Heart left ventricle (tissue), 16 donors: ENCODE measurements at regions of chr1 and their contacts with region 1.

Region 1: DNA sequence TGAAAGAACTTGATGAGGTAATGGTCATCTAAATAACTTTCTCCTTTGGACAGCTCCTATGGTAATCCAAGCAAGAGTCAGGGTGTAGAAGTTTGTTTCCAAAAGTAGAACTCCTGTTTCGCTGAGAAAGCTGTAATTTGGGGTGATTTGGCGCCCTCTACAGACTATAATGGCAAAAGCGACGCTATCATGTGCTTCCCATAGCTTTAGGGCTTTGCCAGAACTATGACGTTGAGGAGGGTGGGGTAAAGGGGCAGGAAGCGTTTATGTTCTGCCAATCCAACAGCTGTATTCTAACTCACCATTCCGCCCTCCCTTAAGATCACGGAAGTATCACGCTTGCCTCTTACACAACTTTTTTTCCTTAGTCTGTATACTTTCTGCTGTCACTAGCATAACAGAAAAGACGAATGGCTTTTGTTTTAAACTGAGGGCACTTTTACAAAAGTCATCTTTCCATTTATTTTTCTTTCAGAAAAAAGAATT is at the start of gene FMO4:
- DNase-seq: peak in 4 of 5 donors; percentile 90 to 97 (median 93)
- ATAC-seq: peak; percentile 100
- H3K4me3 ChIP-seq: peak within 1 kb of the TSS in 11 of 12 donors; percentile 29 to 59 (median 45)
- H3K27ac ChIP-seq: peak within 1 kb of the TSS in 11 of 12 donors; percentile 38 to 83 (median 65)
- H3K4me1 ChIP-seq: peaks cover 0 to 25% (median 7%) of the 10 kb centered on the region in 12 donors
- H3K27me3 ChIP-seq: no peaks in the 10 kb centered on the region
- CTCF ChIP-seq: peak; percentile 68 to 93 (median 85)
- POLR2A ChIP-seq: peak in 1 of 2 donors; percentile 24
- total RNA-seq, gene FMO4: 2.7 to 10.1 (median 5.9) TPM

Region 2: GRCh38 chr1:170967042-170967910 is 346.6 kb before region 1 on chr1:
- intact Hi-C with region 1: loop called in 6 of 10 experiments (anchors 2 to 10 kb)
- DNase-seq: peak in 1 of 5 donors; percentile 6
- ATAC-seq: peak in 2 of 4 donors; percentile 63 to 69
- H3K4me3 ChIP-seq: peak overlapping the region in 1 of 12 donors; percentile 17
- H3K27ac ChIP-seq: no peak overlapping the region
- H3K4me1 ChIP-seq: peaks cover 0 to 4% (median 0%) of the 10 kb centered on the region in 12 donors
- H3K27me3 ChIP-seq: no peaks in the 10 kb centered on the region
- CTCF ChIP-seq: peak; percentile 52 to 79 (median 68)
- POLR2A ChIP-seq: no peak

Region 3: GRCh38 chr1:171075041-171075440 is 238.8 kb before region 1 on chr1:
- intact Hi-C with region 1: loop called in 7 of 10 experiments (anchors 5 to 10 kb)
- DNase-seq: no peak
- ATAC-seq: no peak
- H3K4me3 ChIP-seq: no peak overlapping the region
- H3K27ac ChIP-seq: no peak overlapping the region
- H3K4me1 ChIP-seq: no peaks in the 10 kb centered on the region
- H3K27me3 ChIP-seq: no peaks in the 10 kb centered on the region
- CTCF ChIP-seq: no peak
- POLR2A ChIP-seq: no peak

Region 4: DNA sequence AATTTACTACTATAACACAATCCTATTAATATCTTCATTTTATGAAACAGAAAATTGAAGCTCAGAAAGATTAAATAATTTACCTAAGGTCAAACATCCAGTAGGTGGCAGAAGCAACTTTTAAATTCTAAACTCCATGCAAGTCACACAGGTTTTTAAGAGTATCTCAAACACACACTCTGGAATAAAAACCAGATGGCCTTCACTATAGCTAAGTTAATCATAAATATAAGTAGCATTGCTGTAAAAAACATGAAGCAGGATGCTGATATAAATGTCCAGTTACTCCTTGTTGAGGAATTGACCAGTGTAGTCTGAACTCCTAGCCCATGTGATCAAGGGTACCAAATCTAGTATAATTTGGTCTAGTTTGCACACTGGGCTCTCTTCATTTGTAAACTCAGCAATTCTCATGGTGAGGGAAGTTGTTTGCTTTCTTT is 232.5 kb before region 1 on chr1:
- intact Hi-C with region 1: loop called in 8 of 10 experiments (anchors 2 to 10 kb)
- DNase-seq: no peak
- ATAC-seq: peak in 2 of 4 donors; percentile 46 to 50
- H3K4me3 ChIP-seq: peak overlapping the region in 1 of 12 donors; percentile 4
- H3K27ac ChIP-seq: peak overlapping the region in 9 of 12 donors; percentile 13 to 76 (median 51)
- H3K4me1 ChIP-seq: peaks cover 0 to 29% (median 9%) of the 10 kb centered on the region in 12 donors
- H3K27me3 ChIP-seq: no peaks in the 10 kb centered on the region
- CTCF ChIP-seq: peak; percentile 36 to 71 (median 62)
- POLR2A ChIP-seq: no peak

Region 5: GRCh38 chr1:171245458-171246064 is 68.3 kb before region 1 on chr1:
- intact Hi-C with region 1: loop called (anchors 1 to 5 kb)
- DNase-seq: no peak
- ATAC-seq: peak in 3 of 4 donors; percentile 57 to 69 (median 59)
- H3K4me3 ChIP-seq: no peak overlapping the region
- H3K27ac ChIP-seq: no peak overlapping the region
- H3K4me1 ChIP-seq: peaks cover 0 to 2% (median 0%) of the 10 kb centered on the region in 12 donors
- H3K27me3 ChIP-seq: peaks cover 0 to 2% (median 0%) of the 10 kb centered on the region in 9 donors
- CTCF ChIP-seq: peak; percentile 47 to 75 (median 66)
- POLR2A ChIP-seq: no peak

Region 6: GRCh38 chr1:171434717-171435346 is 121.0 kb after region 1 on chr1:
- intact Hi-C with region 1: no loop called
- DNase-seq: peak in 2 of 5 donors; percentile 29 to 52
- ATAC-seq: peak; percentile 39 to 88 (median 70)
- H3K4me3 ChIP-seq: peak overlapping the region in 4 of 12 donors; percentile 1 to 28 (median 17)
- H3K27ac ChIP-seq: peak overlapping the region in 11 of 12 donors; percentile 18 to 85 (median 64)
- H3K4me1 ChIP-seq: peaks cover 0 to 21% (median 6%) of the 10 kb centered on the region in 12 donors
- H3K27me3 ChIP-seq: no peaks in the 10 kb centered on the region
- CTCF ChIP-seq: no peak
- POLR2A ChIP-seq: no peak

Region 7: GRCh38 chr1:171898941-171899340 is 585.1 kb after region 1 on chr1:
- intact Hi-C with region 1: no loop called
- DNase-seq: no peak
- ATAC-seq: peak in 2 of 4 donors; percentile 26 to 60
- H3K4me3 ChIP-seq: no peak overlapping the region
- H3K27ac ChIP-seq: peak overlapping the region in 2 of 12 donors; percentile 2 to 39
- H3K4me1 ChIP-seq: peaks cover 0 to 7% (median 0%) of the 10 kb centered on the region in 12 donors
- H3K27me3 ChIP-seq: no peaks in the 10 kb centered on the region
- CTCF ChIP-seq: no peak
- POLR2A ChIP-seq: no peak